ENCODE measurements at regions of chr21 and their contacts with region 1.

Region 1: DNA sequence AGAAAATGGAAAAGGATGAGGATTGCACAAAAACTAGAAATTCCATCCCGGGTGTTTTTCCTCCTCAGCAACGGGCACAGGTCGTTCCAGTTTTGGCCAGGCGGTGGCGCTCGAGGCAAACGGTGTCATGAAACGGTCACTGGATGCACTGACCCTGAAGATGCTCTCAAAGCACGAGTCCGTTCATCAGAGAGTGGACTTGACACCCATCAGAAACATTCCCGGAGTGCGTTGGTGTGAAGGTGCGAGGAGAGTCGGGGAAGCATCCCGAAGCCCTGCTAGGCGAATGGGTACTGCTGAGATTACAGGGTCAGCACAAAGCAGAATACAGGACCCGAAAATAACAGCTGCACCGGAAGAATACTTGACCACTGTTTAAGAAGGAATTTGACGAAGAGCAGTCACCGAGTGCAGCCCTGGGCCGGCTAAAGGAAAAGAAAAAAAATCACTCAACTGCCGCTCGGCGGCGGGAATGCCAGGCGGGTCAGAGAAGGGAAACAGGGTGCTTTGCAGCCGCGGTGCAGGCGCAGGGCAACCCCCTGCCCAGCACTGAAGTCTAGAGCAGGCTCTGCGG is 71.7 kb upstream of the ETS2 start:
- DNase-seq: peak; percentile 75
- H3K4me3 Mint-ChIP-seq: no peak overlapping the region
- H3K27ac Mint-ChIP-seq: no peak overlapping the region
- H3K4me1 Mint-ChIP-seq: peaks cover 4% of the 10 kb centered on the region
- H3K27me3 Mint-ChIP-seq: no peaks in the 10 kb centered on the region
- CTCF ChIP-seq: peak; percentile 91

Region 2: DNA sequence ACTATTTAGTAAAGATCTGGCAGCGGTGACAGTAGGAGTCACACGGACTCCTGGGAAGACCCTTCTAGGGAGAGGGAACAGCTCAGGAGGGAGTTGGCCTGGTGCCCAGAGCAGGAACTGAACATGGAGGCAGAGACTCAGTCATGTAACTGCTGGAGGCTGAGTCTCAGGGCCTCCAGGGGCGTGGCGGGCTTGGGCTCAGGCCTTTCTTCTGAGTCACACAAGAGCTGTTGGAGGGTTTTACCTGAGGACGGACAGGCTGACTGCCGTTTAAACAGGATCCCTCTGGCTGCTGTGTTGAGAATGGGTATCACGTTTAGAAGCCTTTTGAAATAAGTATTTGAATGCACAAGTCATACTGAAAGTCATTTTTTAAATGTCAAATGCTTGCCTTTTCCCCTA is 64.4 kb after region 1 on chr21:
- CTCF ChIA-PET with region 1: interaction called, 4 read pairs
- POLR2A ChIA-PET with region 1: interaction called, 5 read pairs
- intact Hi-C with region 1: loop called (anchors 2 kb)
- DNase-seq: peak; percentile 93
- H3K4me3 Mint-ChIP-seq: peak overlapping the region; percentile 30
- H3K27ac Mint-ChIP-seq: peak overlapping the region; percentile 85
- H3K4me1 Mint-ChIP-seq: peaks cover 36% of the 10 kb centered on the region
- H3K27me3 Mint-ChIP-seq: no peaks in the 10 kb centered on the region
- CTCF ChIP-seq: no peak

Region 3: GRCh38 chr21:39885119-39885848 is 1151.2 kb after region 1 on chr21:
- CTCF ChIA-PET with region 1: no interaction called
- POLR2A ChIA-PET with region 1: no interaction called
- intact Hi-C with region 1: no loop called
- DNase-seq: no peak
- H3K4me3 Mint-ChIP-seq: no peak overlapping the region
- H3K27ac Mint-ChIP-seq: no peak overlapping the region
- H3K4me1 Mint-ChIP-seq: no peaks in the 10 kb centered on the region
- H3K27me3 Mint-ChIP-seq: peaks cover 39% of the 10 kb centered on the region
- CTCF ChIP-seq: no peak

Measured in MCF 10A (cell line).